ENCODE measurements at regions of chr15 and their contacts with region 1.

Region 1: DNA sequence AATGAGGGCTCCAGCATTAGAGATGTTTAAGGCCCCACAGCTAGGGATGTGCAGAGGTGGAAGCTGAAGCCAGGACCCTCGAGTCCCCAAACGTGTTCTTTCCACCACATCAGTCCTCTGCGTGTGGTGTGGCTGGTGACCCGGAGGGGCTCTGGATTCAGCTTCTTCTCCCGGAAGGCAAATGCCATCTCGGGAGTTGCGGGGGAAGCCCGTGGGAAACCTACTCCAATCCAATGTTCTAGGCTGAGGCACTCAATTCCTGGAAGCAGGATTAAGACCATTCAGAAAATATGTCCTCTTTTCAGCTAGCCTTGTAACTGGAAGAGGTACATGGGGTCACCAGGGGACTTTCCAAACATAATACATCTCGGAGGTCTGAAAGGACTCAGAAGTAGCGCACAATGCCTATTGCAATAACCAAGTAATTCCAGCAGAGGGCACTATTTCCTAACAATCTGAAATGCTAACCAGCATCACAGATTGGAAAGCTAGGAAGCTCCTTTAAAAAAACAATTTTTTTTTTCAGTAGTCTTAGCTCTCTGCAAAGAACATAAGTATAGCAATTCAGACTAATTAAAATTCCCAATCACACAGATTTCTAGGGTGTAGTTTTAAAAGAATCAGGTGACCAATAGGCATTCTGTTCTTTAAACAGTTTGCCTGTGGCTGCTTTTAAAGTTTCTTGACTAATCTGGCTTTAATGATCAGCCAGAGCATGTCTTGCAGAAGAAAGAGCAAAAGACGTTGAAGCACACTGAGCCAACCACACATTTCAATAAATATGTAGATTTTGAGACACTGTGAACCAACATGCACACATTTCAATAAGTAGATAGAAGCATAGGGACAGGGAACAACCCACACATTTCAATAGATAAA is 36.1 kb downstream of the BNC1 start:
- DNase-seq: peak in 2 of 5 donors; percentile 11 to 19
- ATAC-seq: peak in 1 of 4 donors; percentile 54
- H3K4me3 ChIP-seq: no peak overlapping the region
- H3K27ac ChIP-seq: no peak overlapping the region
- H3K4me1 ChIP-seq: peaks cover 0 to 3% (median 0%) of the 10 kb centered on the region in 12 donors
- H3K27me3 ChIP-seq: peaks cover 7 to 38% (median 24%) of the 10 kb centered on the region in 9 donors
- CTCF ChIP-seq: peak; percentile 85 to 96 (median 94)
- POLR2A ChIP-seq: no peak

Region 2: DNA sequence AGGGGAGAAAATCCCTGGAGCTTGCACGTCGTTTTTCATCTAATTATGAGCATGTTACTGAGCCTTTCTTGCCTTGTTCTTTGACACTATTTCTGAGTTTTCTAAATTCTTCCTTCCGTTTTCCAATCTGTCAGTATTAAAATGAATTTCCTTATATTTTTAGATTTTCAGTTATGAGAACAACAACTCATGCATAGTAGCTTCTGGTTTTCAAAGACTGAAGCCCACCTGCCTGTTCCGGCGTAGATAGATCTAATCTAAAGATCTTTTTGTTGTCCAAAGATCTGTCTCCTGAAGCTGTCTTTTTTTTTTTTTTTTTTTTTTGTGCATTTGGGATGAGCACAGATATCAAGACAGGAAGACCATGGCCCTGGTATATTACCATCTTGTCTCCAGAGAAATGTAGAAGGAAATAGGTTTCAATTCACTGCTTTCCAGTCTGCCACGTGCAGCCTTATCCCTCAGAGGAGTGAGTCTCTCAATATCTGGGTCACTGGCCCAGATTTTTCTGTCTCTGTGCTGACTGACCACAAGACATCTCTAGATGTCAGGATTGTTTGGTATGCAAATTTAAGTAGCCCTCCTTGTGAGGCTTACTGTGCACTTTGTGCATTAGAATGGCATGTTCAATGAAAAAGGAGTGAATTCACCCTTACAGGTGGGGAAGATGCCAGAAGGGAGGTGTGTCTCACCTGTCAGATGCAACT is 1652.1 kb before region 1 on chr15:
- intact Hi-C with region 1: no loop called
- DNase-seq: no peak
- ATAC-seq: no peak
- H3K4me3 ChIP-seq: no peak overlapping the region
- H3K27ac ChIP-seq: no peak overlapping the region
- H3K4me1 ChIP-seq: no peaks in the 10 kb centered on the region
- H3K27me3 ChIP-seq: no peaks in the 10 kb centered on the region
- CTCF ChIP-seq: no peak
- POLR2A ChIP-seq: no peak

Region 3: DNA sequence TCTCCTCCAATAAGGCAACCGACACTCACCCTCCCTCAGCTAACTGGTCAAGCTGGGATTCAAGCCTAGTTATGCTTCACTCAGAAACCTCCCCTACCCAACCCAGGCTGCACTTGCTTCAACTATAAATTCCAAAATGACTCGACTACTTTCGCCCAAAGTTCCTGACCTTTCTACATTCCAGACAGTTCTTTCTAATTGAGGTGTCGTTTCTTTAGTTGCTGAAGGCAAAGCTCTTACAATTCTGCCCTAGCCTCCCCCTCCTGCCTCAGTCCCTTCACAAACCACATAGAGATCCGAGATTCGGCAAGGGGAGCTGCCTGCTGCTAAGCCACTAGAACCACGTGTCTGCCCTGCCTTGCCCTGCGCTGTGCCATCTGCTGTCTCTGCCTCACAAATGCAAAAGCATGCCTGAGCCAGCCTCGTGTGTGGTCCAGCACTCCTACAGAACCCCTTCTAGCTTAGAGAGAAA is 124.1 kb after region 1 on chr15:
- intact Hi-C with region 1: loop called in 2 of 10 experiments (anchors 5 to 10 kb)
- DNase-seq: no peak
- ATAC-seq: peak in 2 of 4 donors; percentile 39 to 49
- H3K4me3 ChIP-seq: no peak overlapping the region
- H3K27ac ChIP-seq: no peak overlapping the region
- H3K4me1 ChIP-seq: no peaks in the 10 kb centered on the region
- H3K27me3 ChIP-seq: peaks cover 0 to 88% (median 45%) of the 10 kb centered on the region in 9 donors
- CTCF ChIP-seq: no peak
- POLR2A ChIP-seq: no peak

Region 4: GRCh38 chr15:83380682-83381081 is 132.3 kb after region 1 on chr15:
- intact Hi-C with region 1: loop called (anchors 1 to 10 kb)
- DNase-seq: peak in 2 of 5 donors; percentile 21 to 42
- ATAC-seq: peak in 3 of 4 donors; percentile 70 to 82 (median 77)
- H3K4me3 ChIP-seq: no peak overlapping the region
- H3K27ac ChIP-seq: no peak overlapping the region
- H3K4me1 ChIP-seq: peaks cover 0 to 11% (median 0%) of the 10 kb centered on the region in 12 donors
- H3K27me3 ChIP-seq: peaks cover 10 to 73% (median 41%) of the 10 kb centered on the region in 9 donors
- CTCF ChIP-seq: peak; percentile 11 to 54 (median 37)
- POLR2A ChIP-seq: no peak

Region 5: DNA sequence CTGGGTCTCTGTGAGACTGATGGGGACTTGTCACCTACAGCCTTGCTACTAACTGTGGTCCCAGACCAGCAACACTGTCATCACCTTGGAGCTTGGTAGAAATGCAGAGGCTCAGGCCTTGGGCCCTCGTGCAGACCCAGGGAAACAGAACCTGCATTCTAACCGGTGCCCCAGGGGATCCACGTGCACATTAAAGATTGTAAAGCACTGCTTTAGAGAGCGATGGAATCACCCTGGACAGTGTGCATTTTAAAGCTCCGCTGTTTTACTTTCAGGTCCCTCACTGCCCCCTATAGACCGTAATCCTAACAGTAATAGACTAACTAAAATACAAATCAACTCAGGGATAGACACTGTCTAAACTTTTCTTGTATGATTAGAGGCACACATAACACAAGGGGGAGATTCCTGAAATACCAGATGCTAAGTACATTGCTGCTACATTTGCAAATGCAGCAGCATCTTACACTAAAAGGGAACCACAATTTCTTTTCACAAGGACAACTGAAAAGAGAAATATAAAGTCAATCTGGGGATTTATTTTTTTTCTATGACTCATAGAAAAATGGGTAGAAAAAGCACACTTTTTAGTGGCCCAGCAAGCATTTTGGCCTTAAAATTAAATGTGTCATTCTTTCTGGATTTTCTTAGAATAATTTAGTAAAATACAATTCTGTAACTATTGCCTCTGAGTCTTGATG is 188.2 kb after region 1 on chr15:
- intact Hi-C with region 1: loop called (anchors 2 to 10 kb)
- DNase-seq: no peak
- ATAC-seq: peak in 2 of 4 donors; percentile 51 to 53
- H3K4me3 ChIP-seq: no peak overlapping the region
- H3K27ac ChIP-seq: no peak overlapping the region
- H3K4me1 ChIP-seq: no peaks in the 10 kb centered on the region
- H3K27me3 ChIP-seq: peaks cover 0 to 28% (median 6%) of the 10 kb centered on the region in 9 donors
- CTCF ChIP-seq: peak in 11 of 12 donors; percentile 24 to 47 (median 37)
- POLR2A ChIP-seq: no peak